Breast epithelium (tissue), 4 donors: ENCODE measurements at regions of chr16 and their contacts with region 1.

Region 1: DNA sequence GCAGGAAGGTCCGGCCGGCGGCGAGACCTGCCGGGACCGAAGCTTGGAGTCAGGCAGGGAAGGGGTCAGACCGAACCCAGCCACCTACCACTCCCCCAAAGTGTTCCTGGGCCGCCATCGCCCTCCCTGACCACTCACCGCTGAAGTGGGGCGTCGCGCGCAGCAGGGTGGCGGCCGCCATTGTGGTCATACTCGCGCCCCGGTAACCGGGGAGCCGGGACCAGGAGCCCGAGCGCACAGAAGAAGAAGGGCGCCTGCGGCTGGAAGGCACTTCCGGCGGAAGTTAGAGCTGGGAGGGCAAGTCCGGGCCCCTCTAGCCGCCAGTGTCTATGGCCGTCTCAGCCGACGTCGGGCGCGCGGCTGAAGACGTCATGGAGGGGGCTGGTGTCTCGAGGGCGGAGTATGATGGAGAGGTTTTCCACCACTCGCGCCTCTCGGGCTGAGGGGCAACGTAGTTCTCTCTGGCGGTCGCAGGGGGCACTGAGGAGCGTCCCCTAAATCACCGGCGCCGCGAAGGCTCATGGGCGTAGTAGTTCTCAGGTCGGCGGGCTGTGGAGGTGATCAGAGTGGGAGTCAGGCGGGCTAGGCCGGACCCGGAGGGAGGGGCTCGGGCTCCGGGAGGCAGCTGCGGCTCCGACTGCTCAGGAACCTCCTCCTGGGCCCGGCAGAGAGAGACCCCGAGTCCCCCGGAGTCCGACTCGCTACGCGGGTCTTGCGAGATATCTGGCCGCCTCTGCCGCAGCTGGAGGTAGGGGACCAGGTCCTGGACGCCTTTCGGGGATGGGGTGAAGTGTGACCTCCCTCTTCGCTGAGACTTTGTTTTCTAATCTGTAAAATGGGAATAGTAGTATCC is at the start of gene TUFM:
- DNase-seq: peak; percentile 97 to 98
- H3K4me3 ChIP-seq: peak within 1 kb of the TSS; percentile 89 to 96 (median 94)
- H3K27ac ChIP-seq: peak within 1 kb of the TSS; percentile 92 to 94
- H3K4me1 ChIP-seq: peaks cover 7 to 9% of the 10 kb centered on the region in 2 donors
- H3K27me3 ChIP-seq: no peaks in the 10 kb centered on the region
- CTCF ChIP-seq: peak; percentile 65 to 73 (median 71)
- POLR2A ChIP-seq: no peak
- total RNA-seq, gene TUFM: 97.9 to 103 (median 98.4) TPM

Region 2: DNA sequence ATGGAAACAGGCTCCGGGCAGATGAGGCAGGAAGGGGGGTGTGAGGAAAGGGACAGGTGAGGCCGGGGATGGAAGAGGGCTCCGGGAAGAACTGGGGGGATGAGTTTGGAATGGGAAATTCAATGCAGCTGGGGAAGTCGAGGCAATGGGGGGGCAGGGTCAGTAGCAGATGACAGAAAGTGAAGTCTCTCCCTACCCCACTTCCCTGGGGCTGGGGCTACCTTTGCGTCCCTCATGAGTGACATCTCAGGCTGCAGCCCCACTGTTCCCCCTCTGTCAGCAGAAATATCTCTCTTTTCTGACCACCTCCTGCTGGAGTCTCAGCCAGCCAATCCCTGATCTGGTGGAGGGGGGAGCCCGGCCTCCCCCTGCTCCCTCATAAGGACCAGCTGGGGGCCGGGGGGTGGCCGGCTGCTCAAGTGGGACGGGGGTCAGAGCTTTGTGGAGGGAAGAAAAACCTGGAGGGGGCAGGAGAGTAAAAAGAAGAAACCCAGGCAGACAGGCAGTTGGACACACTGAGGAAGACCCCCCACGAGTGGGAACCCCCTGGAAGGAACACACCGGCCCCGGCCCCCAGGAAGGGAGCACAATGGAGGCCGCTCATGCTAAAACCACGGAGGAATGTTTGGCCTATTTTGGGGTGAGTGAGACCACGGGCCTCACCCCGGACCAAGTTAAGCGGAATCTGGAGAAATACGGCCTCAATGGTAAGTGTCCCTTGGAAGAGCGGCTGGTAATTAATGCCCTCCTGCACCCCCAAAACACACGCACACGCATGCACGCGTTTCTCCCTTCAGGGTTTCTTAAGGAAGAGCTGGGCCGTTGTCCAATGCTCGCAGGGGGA is 32.0 kb after region 1 on chr16 and contains the start of gene ATP2A1:
- intact Hi-C with region 1: loop called (anchors 1 kb)
- DNase-seq: no peak
- H3K4me3 ChIP-seq: peak within 1 kb of the TSS; percentile 48 to 73 (median 71)
- H3K27ac ChIP-seq: no peak within 1 kb of the TSS
- H3K4me1 ChIP-seq: peaks cover 0 to 4% of the 10 kb centered on the region in 2 donors
- H3K27me3 ChIP-seq: no peaks in the 10 kb centered on the region
- CTCF ChIP-seq: no peak
- POLR2A ChIP-seq: no peak
- total RNA-seq, gene ATP2A1: 0.15 to 0.48 (median 0.33) TPM